ENCODE measurements at regions of chr17 and their contacts with region 1.

Region 1: DNA sequence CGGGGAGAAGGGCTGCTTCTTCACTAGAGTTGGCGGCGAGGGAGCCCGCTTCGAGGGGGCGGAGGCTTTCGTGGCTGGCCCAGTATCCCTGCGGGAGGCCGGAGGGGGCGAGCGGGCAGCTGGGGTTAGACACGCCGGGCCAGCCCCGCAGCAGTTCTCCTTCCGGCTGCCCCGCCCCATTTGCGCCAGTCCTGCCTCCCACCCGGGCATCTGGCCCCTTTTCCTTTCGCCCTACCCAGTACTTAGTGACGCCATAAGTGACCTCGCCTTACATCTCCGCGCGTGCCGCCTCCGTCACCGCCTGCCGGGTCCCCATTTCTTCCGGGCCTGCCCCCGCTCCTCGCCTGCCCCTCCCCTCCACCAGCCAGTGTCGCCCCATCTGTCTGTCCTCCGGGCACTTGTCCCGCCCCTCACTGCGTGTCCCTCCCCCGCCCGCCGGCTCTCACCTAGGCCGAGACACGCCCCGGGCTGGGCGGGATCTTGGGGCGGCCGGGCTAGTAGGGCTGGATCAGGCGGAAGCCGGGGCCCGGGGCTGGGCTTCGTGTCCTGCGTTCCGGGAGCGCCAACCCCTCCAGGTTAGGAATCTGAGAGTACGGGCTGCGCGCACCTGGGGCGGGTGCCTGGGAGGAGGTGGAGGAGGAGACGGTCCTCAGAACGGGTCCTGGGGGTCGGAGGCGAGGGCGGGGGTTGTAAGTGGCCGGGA is 14.3 kb downstream of the SPATA32 start:
- DNase-seq: peak; percentile 92 to 99 (median 93)
- H3K4me3 ChIP-seq: peak overlapping the region; percentile 42 to 81
- H3K4me3 Mint-ChIP-seq: peak overlapping the region; percentile 85 to 91 (median 89)
- H3K27ac ChIP-seq: peak overlapping the region; percentile 91
- H3K27ac Mint-ChIP-seq: peak overlapping the region; percentile 94 to 99 (median 98)
- H3K4me1 ChIP-seq: peaks cover 74% of the 10 kb centered on the region
- H3K4me1 Mint-ChIP-seq: peaks cover 24 to 80% (median 51%) of the 10 kb centered on the region in 4 donors
- H3K27me3 ChIP-seq: no peaks in the 10 kb centered on the region
- H3K27me3 Mint-ChIP-seq: no peaks in the 10 kb centered on the region

Region 2: GRCh38 chr17:45077643-45078042 is 169.9 kb before region 1 on chr17:
- CTCF ChIA-PET with region 1: no interaction called
- POLR2A ChIA-PET with region 1: no interaction called
- intact Hi-C with region 1: no loop called
- DNase-seq: no peak
- H3K4me3 ChIP-seq: no peak overlapping the region
- H3K4me3 Mint-ChIP-seq: no peak overlapping the region
- H3K27ac ChIP-seq: no peak overlapping the region
- H3K27ac Mint-ChIP-seq: peak overlapping the region in 2 of 7 donors; percentile 27 to 60
- H3K4me1 ChIP-seq: no peaks in the 10 kb centered on the region
- H3K4me1 Mint-ChIP-seq: peaks cover 16 to 31% (median 22%) of the 10 kb centered on the region in 4 donors
- H3K27me3 ChIP-seq: no peaks in the 10 kb centered on the region
- H3K27me3 Mint-ChIP-seq: no peaks in the 10 kb centered on the region

Region 3: GRCh38 chr17:45161019-45161825 is 86.4 kb before region 1 on chr17:
- CTCF ChIA-PET with region 1: no interaction called
- POLR2A ChIA-PET with region 1: interaction called, 19 read pairs
- intact Hi-C with region 1: loop called (anchors 1 kb)
- DNase-seq: peak; percentile 99 to 100 (median 99)
- H3K4me3 ChIP-seq: peak overlapping the region; percentile 72 to 87
- H3K4me3 Mint-ChIP-seq: peak overlapping the region; percentile 85 to 99 (median 98)
- H3K27ac ChIP-seq: peak overlapping the region; percentile 99
- H3K27ac Mint-ChIP-seq: peak overlapping the region; percentile 90 to 100 (median 98)
- H3K4me1 ChIP-seq: peaks cover 33% of the 10 kb centered on the region
- H3K4me1 Mint-ChIP-seq: peaks cover 19 to 52% (median 39%) of the 10 kb centered on the region in 4 donors
- H3K27me3 ChIP-seq: no peaks in the 10 kb centered on the region
- H3K27me3 Mint-ChIP-seq: no peaks in the 10 kb centered on the region

Region 4: GRCh38 chr17:45228763-45229539 is 18.6 kb before region 1 on chr17:
- CTCF ChIA-PET with region 1: interaction called, 44 read pairs
- POLR2A ChIA-PET with region 1: interaction called, 1,143 read pairs
- intact Hi-C with region 1: loop called (anchors 1 kb)
- DNase-seq: peak; percentile 78 to 97 (median 84)
- H3K4me3 ChIP-seq: peak overlapping the region; percentile 43 to 74
- H3K4me3 Mint-ChIP-seq: peak overlapping the region; percentile 96 to 100 (median 99)
- H3K27ac ChIP-seq: peak overlapping the region; percentile 97
- H3K27ac Mint-ChIP-seq: peak overlapping the region; percentile 99 to 100 (median 100)
- H3K4me1 ChIP-seq: peaks cover 95% of the 10 kb centered on the region
- H3K4me1 Mint-ChIP-seq: peaks cover 48 to 99% (median 69%) of the 10 kb centered on the region in 4 donors
- H3K27me3 ChIP-seq: no peaks in the 10 kb centered on the region
- H3K27me3 Mint-ChIP-seq: no peaks in the 10 kb centered on the region

Region 5: DNA sequence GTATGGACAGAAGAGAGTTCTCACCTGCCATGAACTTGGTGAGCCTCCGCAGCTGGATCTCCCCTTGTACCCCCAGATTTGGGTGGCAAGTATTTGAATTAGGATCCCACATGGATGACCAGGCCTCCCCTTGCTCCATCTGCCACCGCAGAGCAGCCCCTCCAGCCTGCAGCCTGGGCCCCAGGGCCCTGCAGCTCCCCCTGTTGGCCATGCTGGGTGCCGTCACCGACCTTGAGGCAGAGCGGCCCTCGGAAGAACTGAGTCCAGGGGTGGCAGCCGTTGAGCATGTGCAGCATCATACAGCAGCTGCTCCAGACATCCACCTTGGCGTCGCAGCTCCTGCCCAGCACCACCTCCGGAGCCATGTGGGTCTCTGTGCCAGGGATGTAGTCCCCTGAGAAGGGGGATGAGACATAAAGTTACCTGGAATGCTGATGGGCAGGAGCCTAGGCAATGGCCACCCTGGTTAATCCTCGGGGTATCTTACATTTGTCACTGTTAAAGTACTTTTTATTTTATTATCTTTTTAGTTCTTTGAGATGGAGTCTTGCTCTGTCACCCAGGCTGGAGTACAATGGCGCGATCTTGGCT is 23.3 kb after region 1 on chr17:
- CTCF ChIA-PET with region 1: interaction called, 29 read pairs
- POLR2A ChIA-PET with region 1: interaction called, 57 read pairs
- intact Hi-C with region 1: loop called (anchors 1 kb)
- DNase-seq: peak; percentile 38 to 60 (median 41)
- H3K4me3 ChIP-seq: no peak overlapping the region
- H3K4me3 Mint-ChIP-seq: no peak overlapping the region
- H3K27ac ChIP-seq: no peak overlapping the region
- H3K27ac Mint-ChIP-seq: peak overlapping the region in 4 of 7 donors; percentile 22 to 31 (median 26)
- H3K4me1 ChIP-seq: no peaks in the 10 kb centered on the region
- H3K4me1 Mint-ChIP-seq: no peaks in the 10 kb centered on the region
- H3K27me3 ChIP-seq: no peaks in the 10 kb centered on the region
- H3K27me3 Mint-ChIP-seq: no peaks in the 10 kb centered on the region

Region 6: DNA sequence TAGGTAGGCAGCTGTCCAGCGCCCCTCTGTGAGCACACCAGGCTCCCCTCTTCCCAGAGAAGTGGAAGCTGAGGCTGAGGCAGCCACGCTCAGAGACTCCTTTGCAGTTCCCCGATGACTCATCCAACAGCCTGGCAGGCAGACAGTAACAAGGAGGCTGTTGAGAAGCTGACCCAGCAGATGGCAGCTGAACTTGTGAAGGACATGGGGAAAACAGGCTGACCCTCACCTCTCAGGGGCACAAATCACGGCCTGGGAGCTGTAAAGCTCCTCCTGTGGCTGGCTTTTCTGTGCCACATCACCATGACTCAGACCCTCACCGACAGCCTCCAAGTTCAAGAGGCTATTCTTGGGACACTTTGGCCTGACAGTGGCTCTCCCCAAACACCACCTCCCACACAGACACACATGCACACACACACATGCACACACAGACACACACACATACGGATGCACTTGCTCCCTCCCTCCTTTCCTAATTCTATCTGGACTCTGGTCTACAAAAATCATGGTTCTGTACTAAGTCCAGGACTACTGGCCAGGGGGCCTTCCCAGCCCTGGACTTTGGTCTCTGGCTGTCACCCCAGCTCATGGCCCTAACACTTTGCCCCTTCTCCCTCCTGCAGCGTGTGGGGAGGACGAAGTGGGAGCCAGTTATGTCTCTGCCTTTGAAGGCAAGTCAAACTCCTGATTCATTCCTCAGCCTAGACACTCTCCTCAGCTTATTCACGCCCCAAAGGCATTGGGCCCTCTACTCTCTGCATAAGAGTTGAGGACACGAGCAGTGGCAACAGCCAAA is 46.0 kb after region 1 on chr17:
- CTCF ChIA-PET with region 1: no interaction called
- POLR2A ChIA-PET with region 1: no interaction called
- intact Hi-C with region 1: no loop called
- DNase-seq: no peak
- H3K4me3 ChIP-seq: no peak overlapping the region
- H3K4me3 Mint-ChIP-seq: peak overlapping the region in 2 of 8 donors; percentile 8 to 43
- H3K27ac ChIP-seq: no peak overlapping the region
- H3K27ac Mint-ChIP-seq: peak overlapping the region; percentile 62 to 90 (median 86)
- H3K4me1 ChIP-seq: peaks cover 64% of the 10 kb centered on the region
- H3K4me1 Mint-ChIP-seq: peaks cover 42 to 77% (median 51%) of the 10 kb centered on the region in 4 donors
- H3K27me3 ChIP-seq: no peaks in the 10 kb centered on the region
- H3K27me3 Mint-ChIP-seq: no peaks in the 10 kb centered on the region

Region 7: GRCh38 chr17:45317112-45317928 is 69.7 kb after region 1 on chr17:
- CTCF ChIA-PET with region 1: interaction called, 6 read pairs
- POLR2A ChIA-PET with region 1: interaction called, 130 read pairs
- intact Hi-C with region 1: loop called (anchors 1 kb)
- DNase-seq: peak; percentile 99 to 100 (median 100)
- H3K4me3 ChIP-seq: peak overlapping the region; percentile 48 to 92
- H3K4me3 Mint-ChIP-seq: peak overlapping the region; percentile 88 to 93 (median 91)
- H3K27ac ChIP-seq: peak overlapping the region; percentile 77
- H3K27ac Mint-ChIP-seq: peak overlapping the region; percentile 86 to 98 (median 97)
- H3K4me1 ChIP-seq: peaks cover 84% of the 10 kb centered on the region
- H3K4me1 Mint-ChIP-seq: peaks cover 60 to 91% (median 75%) of the 10 kb centered on the region in 4 donors
- H3K27me3 ChIP-seq: no peaks in the 10 kb centered on the region
- H3K27me3 Mint-ChIP-seq: no peaks in the 10 kb centered on the region

Region 8: GRCh38 chr17:45341533-45342158 is 94.1 kb after region 1 on chr17:
- CTCF ChIA-PET with region 1: no interaction called
- POLR2A ChIA-PET with region 1: no interaction called
- intact Hi-C with region 1: no loop called
- DNase-seq: no peak
- H3K4me3 ChIP-seq: no peak overlapping the region
- H3K4me3 Mint-ChIP-seq: no peak overlapping the region
- H3K27ac ChIP-seq: no peak overlapping the region
- H3K27ac Mint-ChIP-seq: peak overlapping the region in 2 of 7 donors; percentile 56 to 77
- H3K4me1 ChIP-seq: no peaks in the 10 kb centered on the region
- H3K4me1 Mint-ChIP-seq: no peaks in the 10 kb centered on the region
- H3K27me3 ChIP-seq: no peaks in the 10 kb centered on the region
- H3K27me3 Mint-ChIP-seq: peaks cover 0 to 3% of the 10 kb centered on the region in 2 donors

Region 9: DNA sequence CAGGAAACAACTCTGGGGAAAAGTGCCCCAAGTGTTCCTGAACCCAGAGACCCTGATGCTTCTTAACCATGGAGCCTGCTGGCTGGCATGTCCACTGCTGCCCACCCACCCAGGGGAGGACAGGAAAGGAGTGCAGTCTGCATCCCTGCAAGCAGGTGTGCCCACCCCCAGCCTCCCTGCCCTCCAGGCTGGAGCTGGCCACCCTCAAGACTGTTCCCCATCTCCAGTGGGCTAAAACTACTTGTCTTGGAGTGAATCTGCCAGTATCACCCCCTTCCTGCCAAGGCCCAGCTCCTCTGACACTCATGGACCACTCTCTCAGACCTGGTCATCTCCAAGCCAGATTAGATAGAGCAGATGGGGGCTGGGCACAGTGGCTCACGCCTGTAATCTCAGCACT is 155.3 kb after region 1 on chr17:
- CTCF ChIA-PET with region 1: no interaction called
- POLR2A ChIA-PET with region 1: no interaction called
- intact Hi-C with region 1: no loop called
- DNase-seq: no peak
- H3K4me3 ChIP-seq: no peak overlapping the region
- H3K4me3 Mint-ChIP-seq: no peak overlapping the region
- H3K27ac ChIP-seq: no peak overlapping the region
- H3K27ac Mint-ChIP-seq: peak overlapping the region in 1 of 7 donors; percentile 43
- H3K4me1 ChIP-seq: peaks cover 19% of the 10 kb centered on the region
- H3K4me1 Mint-ChIP-seq: peaks cover 10 to 20% (median 11%) of the 10 kb centered on the region in 4 donors
- H3K27me3 ChIP-seq: no peaks in the 10 kb centered on the region
- H3K27me3 Mint-ChIP-seq: no peaks in the 10 kb centered on the region

Measured in CD4-positive, alpha-beta memory T cell (primary cell).